ENCODE measurements at regions of chr18 and their contacts with region 1.

Region 1: GRCh38 chr18:25862881-25863600 is 227.4 kb downstream of the SS18 start:
- DNase-seq: no peak
- ATAC-seq: no peak
- H3K4me3 ChIP-seq: no peak overlapping the region
- H3K27ac ChIP-seq: no peak overlapping the region
- H3K4me1 ChIP-seq: no peaks in the 10 kb centered on the region
- H3K27me3 ChIP-seq: no peaks in the 10 kb centered on the region
- CTCF ChIP-seq: no peak

Region 2: GRCh38 chr18:25805323-25805722 is 57.7 kb before region 1 on chr18:
- intact Hi-C with region 1: loop called in 1 of 10 experiments (anchors 10 kb)
- DNase-seq: no peak
- ATAC-seq: peak in 1 of 8 donors; percentile 74
- H3K4me3 ChIP-seq: no peak overlapping the region
- H3K27ac ChIP-seq: no peak overlapping the region
- H3K4me1 ChIP-seq: no peaks in the 10 kb centered on the region
- H3K27me3 ChIP-seq: no peaks in the 10 kb centered on the region
- CTCF ChIP-seq: no peak

Region 3: DNA sequence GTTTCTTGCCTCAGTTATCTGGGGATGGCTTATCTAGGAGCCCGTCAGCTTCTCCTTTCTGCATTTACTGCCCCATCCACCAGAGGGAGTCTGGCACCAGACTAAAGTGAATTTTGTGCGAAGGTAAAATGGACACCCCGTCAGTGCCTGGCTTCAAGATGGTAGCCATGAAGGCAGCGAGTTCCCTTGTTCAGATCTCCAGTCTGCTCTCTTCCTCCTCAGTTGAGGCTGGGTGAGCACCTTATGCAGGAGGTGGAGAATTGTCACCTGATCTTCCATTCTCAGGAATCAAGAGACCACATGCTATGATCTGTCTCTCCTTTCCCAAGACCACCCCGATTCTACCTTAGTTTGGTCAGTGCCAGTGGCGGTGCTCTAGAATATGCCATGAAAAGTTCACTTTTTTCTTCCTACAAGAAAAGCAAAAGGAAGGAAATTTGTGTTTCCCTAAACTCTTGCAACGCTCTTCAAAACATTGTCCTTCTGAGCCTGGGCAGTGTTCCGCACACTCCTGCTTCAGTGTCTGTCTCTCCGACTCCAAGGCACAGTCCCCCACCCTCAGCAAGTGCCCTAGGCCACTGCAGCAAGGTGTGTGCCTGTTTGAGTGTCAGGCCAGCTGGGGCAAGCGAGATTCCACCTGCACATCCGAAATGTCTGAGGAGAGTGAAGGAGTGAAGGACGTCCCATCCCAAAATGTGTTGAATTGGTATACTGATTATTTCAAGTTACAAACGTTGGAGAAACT is 58.8 kb after region 1 on chr18:
- intact Hi-C with region 1: loop called in 1 of 10 experiments (anchors 10 kb)
- DNase-seq: no peak
- ATAC-seq: no peak
- H3K4me3 ChIP-seq: no peak overlapping the region
- H3K27ac ChIP-seq: no peak overlapping the region
- H3K4me1 ChIP-seq: no peaks in the 10 kb centered on the region
- H3K27me3 ChIP-seq: peaks cover 0 to 4% (median 0%) of the 10 kb centered on the region in 7 donors
- CTCF ChIP-seq: peak in 7 of 9 donors; percentile 28 to 62 (median 34)